PC-9 (cell line): ENCODE measurements at regions of chr16 and their contacts with region 1.

Region 1: GRCh38 chr16:67428146-67428731 is 2.7 kb upstream of the HSD11B2 start:
- DNase-seq: peak; percentile 59 to 74
- H3K4me3 ChIP-seq: no peak overlapping the region
- H3K27ac ChIP-seq: no peak overlapping the region
- H3K4me1 ChIP-seq: no peaks in the 10 kb centered on the region; the same call in none of the 2 replicates
- H3K27me3 ChIP-seq: no peaks in the 10 kb centered on the region
- CTCF ChIP-seq: peak; percentile 79

Region 2: DNA sequence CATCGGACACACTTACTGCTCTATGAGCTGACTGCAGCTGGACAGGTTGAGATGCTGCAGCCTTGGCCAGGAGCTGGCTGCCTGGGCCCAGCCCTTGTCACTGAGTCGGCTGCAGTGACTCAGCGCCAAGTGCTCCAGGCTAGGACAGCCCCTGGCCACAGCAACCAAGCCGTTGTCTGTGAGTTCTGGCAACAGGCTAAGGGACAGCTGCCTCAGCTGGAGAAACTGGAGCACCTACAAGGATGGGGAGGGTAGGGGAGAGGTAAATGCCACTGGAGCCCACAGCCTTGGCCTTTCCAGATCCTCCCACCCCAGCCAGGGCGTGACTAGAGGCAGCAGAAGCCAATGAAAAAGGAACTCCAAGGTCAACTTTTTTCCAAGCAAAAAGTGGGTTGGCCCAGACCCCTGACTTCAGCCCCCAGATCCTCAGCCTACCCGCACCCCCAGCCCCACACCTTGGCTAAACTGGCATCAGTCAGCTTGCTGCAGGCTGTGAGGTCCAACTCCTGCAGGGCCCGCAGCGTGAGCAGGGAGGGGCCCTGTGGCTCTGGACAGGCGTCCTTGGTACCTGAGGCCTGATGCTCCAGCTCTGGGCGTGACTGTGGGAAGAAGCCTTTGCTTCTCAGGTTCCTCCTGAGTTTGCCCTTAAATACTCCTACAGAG is 220.3 kb before region 1 on chr16:
- CTCF ChIA-PET with region 1: interaction called, 10 read pairs
- POLR2A ChIA-PET with region 1: no interaction called
- intact Hi-C with region 1: no loop called
- DNase-seq: peak; percentile 77 to 86
- H3K4me3 ChIP-seq: no peak overlapping the region; the same call in 1 of the 2 replicates
- H3K27ac ChIP-seq: peak overlapping the region; percentile 64
- H3K4me1 ChIP-seq: peaks cover 50% of the 10 kb centered on the region
- H3K27me3 ChIP-seq: no peaks in the 10 kb centered on the region
- CTCF ChIP-seq: no peak

Region 3: DNA sequence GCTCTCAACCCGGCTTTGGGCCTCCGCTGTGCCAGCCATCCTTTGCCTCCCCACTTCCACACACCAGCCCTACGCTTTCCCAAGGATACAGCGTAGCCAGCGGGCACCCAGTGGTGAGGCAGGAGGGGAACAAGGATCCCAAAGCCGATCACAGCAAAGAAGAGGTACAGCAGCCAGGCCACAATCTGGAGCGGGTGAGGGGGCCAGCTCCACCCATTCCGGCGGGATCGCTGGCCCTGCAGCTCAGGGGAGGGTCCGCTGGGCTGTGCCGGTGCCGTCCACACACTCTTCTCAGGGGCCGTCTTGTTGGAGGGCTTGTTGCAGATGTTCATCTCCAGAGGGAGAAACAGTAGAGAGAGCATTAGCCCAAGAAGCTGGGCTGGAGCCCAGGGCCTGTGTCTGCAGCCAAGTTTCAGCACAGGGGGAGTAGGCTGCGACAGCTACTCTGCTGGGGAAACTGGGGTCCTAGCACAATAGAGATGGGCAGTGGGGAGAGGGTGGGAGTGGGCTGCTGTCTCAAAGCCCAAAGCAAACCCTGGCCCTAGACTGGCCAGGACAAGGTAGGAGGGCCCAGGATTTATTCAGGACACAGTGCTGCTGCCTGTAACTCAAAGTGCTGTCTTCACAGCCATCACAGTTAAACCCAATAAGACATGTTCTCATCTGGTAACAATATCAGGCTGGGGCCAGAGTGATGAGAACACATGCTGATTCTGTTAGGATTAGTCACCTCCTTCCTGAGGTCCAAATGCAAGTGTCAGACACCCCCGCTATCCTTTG is 21.9 kb before region 1 on chr16:
- CTCF ChIA-PET with region 1: interaction called, 11 read pairs
- POLR2A ChIA-PET with region 1: no interaction called
- intact Hi-C with region 1: no loop called
- DNase-seq: no peak
- H3K4me3 ChIP-seq: no peak overlapping the region
- H3K27ac ChIP-seq: peak overlapping the region; percentile 86; the same call in 1 of the 2 replicates
- H3K4me1 ChIP-seq: peaks cover 33% of the 10 kb centered on the region
- H3K27me3 ChIP-seq: no peaks in the 10 kb centered on the region
- CTCF ChIP-seq: no peak

Region 4: DNA sequence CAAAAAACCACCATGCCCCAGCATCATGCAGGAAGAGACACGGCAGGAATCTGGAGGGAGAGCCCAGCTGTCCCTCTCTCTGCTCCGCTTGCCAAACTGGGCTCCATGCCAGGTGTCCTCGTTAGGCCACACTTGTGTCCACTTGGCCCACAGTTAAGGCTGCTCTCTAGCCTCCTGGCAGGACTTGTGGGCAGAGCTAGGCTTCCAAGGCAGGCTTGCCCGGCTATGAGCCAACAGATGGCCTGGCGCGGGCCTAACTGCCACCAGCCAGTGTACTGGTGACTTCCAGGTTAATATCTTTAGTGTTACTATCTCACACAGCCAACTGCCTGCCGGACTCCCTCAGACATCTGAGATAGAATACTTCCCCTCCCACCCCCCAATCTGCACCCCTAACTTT is 42.1 kb after region 1 on chr16:
- CTCF ChIA-PET with region 1: interaction called, 13 read pairs
- POLR2A ChIA-PET with region 1: no interaction called
- intact Hi-C with region 1: loop called (anchors 1 kb)
- DNase-seq: no peak
- H3K4me3 ChIP-seq: no peak overlapping the region
- H3K27ac ChIP-seq: no peak overlapping the region
- H3K4me1 ChIP-seq: 0 out of 2 replicates have a peak, but pooled peaks cover 4% of the 10 kb centered on the region
- H3K27me3 ChIP-seq: no peaks in the 10 kb centered on the region
- CTCF ChIP-seq: no peak